PC-9 (cell line): ENCODE measurements at regions of chr9 and their contacts with region 1.

Region 1: GRCh38 chr9:87497604-87498045 is at the start of gene DAPK1:
- DNase-seq: peak; percentile 52 to 81
- H3K4me3 ChIP-seq: peak within 1 kb of the TSS; percentile 70
- H3K27ac ChIP-seq: peak within 1 kb of the TSS; percentile 45
- H3K4me1 ChIP-seq: peaks cover 61% of the 10 kb centered on the region
- H3K27me3 ChIP-seq: no peaks in the 10 kb centered on the region
- CTCF ChIP-seq: peak; percentile 33; the same call in 1 of the 2 replicates
- total RNA-seq, gene DAPK1: 100 and 158 TPM in 2 replicates

Region 2: DNA sequence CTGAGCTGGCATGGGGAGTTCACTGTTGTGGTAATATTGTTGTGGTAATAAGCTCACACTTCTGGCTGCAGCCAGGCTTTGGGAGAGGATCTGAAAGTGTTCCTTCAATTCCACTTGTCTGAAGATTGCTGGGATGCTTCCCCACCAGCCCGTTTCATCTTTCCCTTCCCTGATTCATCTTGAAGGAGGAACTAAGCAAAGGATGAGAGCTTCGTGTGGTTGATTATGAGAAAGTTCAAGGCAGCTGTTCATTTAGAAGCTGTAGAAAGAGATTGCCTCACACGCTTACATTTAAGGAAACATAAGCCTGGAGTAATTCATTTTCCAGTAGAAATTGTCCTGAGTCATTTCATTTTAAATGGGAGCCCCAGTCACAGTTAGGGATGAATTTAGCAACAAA is 427.9 kb before region 1 on chr9:
- CTCF ChIA-PET with region 1: no interaction called
- POLR2A ChIA-PET with region 1: no interaction called
- intact Hi-C with region 1: no loop called
- DNase-seq: no peak
- H3K4me3 ChIP-seq: no peak overlapping the region
- H3K27ac ChIP-seq: no peak overlapping the region
- H3K4me1 ChIP-seq: no peaks in the 10 kb centered on the region
- H3K27me3 ChIP-seq: no peaks in the 10 kb centered on the region
- CTCF ChIP-seq: no peak

Region 3: GRCh38 chr9:87382902-87383301 is 114.7 kb before region 1 on chr9:
- CTCF ChIA-PET with region 1: interaction called, 15 read pairs
- POLR2A ChIA-PET with region 1: no interaction called
- intact Hi-C with region 1: no loop called
- DNase-seq: no peak
- H3K4me3 ChIP-seq: no peak overlapping the region
- H3K27ac ChIP-seq: no peak overlapping the region
- H3K4me1 ChIP-seq: peaks cover 48% of the 10 kb centered on the region
- H3K27me3 ChIP-seq: no peaks in the 10 kb centered on the region
- CTCF ChIP-seq: no peak

Region 4: DNA sequence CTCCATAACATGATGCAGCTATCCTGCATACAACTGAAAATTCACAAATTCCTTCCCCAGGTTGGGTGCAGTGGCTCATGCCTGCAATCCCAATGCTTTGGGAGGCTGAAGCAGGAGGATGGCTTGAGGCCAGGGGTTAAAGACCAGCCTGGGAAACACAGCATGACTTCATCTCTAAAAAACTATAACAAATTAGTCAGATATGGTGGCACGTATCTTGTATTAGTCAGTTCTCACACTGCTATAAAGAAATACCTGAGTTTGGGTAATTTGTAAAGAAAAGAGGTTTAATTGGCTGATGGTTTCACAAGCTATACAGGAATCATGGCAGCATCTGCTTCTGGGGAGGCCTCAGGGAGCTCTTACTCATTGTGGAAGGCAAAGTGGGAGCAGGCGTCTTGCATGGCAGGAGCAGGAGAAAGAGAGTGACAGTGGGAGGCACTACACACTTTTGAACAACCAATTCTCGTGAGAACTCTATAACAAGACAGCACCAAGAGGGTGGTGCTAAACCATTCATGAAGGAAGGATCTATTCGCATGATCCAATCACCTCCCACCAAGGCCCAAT is 56.3 kb before region 1 on chr9:
- CTCF ChIA-PET with region 1: no interaction called
- POLR2A ChIA-PET with region 1: no interaction called
- intact Hi-C with region 1: loop called (anchors 5 kb)
- DNase-seq: no peak
- H3K4me3 ChIP-seq: no peak overlapping the region
- H3K27ac ChIP-seq: no peak overlapping the region
- H3K4me1 ChIP-seq: no peaks in the 10 kb centered on the region; the same call in 1 of the 2 replicates
- H3K27me3 ChIP-seq: no peaks in the 10 kb centered on the region
- CTCF ChIP-seq: no peak

Region 5: GRCh38 chr9:87606841-87607521 is 109.4 kb after region 1 on chr9:
- CTCF ChIA-PET with region 1: no interaction called
- POLR2A ChIA-PET with region 1: no interaction called
- intact Hi-C with region 1: loop called (anchors 2 kb)
- DNase-seq: peak; percentile 31 to 89
- H3K4me3 ChIP-seq: no peak overlapping the region
- H3K27ac ChIP-seq: peak overlapping the region; percentile 88
- H3K4me1 ChIP-seq: peaks cover 32% of the 10 kb centered on the region
- H3K27me3 ChIP-seq: no peaks in the 10 kb centered on the region
- CTCF ChIP-seq: no peak

Region 6: GRCh38 chr9:87725900-87726709 is 228.5 kb after region 1 on chr9 and contains the start of gene CTSL:
- CTCF ChIA-PET with region 1: no interaction called
- POLR2A ChIA-PET with region 1: interaction called, 13 read pairs
- intact Hi-C with region 1: no loop called
- DNase-seq: peak; percentile 75 to 80
- H3K4me3 ChIP-seq: peak within 1 kb of the TSS; percentile 59
- H3K27ac ChIP-seq: peak within 1 kb of the TSS; percentile 73
- H3K4me1 ChIP-seq: peaks cover 22% of the 10 kb centered on the region
- H3K27me3 ChIP-seq: no peaks in the 10 kb centered on the region
- CTCF ChIP-seq: peak; percentile 53
- total RNA-seq, gene CTSL: 82.6 and 105 TPM in 2 replicates